GM13977 (cell line): ENCODE measurements at regions of chr17 and their contacts with region 1.

Region 1: DNA sequence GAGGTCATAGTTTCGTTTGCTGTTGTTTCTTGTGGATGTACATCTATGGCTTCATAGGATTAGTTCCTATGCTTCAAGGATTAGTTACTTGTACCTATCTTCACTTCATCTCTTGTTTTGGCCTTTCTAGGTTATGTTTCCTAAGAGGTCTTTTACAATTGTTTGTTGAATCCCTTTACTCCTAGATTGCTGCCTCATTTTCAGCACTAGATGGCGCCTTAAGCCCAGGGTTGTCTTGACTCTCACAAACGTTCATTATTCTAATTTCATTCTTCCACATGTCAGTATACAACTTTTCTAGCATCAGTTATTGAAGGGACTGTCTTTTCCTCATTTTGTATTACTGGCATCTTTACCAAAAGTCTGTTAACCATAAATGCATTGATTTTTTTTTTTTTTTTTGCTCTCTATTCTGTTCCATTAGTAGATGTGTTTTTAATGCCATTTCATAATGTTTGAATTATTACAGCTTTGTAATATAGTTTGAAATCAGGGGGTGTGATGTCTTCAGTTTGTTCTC is 45.0 kb upstream of the NACA2 start:
- DNase-seq: peak; percentile 12
- CTCF ChIP-seq: peak; percentile 79

Region 2: DNA sequence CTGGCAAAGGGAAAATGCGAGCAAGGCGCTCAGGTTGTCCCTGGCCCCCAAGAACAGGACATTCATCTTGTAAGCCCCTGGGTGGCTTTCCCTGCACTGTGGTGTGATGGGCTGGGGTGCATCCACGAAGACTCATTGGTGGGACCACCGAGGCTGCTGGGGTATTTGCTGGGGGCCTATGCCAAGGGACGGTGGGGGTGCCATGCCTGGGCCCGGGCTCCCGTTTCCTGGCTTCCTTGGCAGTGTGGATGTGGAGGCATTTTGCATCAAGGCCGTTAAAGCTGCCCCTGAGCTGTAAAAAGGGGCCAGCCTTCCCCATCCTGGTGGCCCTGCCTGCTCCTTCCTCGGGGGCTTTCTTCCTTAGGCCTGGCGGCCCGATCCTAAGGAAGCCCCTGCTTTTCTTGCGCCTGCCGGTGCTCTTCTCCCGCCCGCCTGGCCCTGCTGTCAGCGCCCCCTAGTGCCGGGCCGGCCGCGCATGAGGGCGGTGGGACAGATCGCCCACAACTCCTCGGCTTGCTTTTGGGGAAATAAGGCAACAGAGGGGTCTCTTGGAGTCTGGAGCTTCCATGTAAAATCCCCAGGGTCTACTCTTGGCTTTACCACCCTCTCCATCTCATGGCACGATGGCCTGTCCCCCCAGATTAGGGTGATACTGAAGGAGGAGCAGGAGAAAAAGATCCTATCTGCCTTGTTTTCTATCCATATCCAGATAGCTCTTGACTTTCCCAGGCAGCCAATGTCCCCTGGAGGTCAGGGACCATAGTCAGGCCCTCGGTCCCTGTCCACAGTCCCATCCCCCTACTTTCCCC is 246.1 kb before region 1 on chr17:
- in situ Hi-C with region 1: no loop called
- DNase-seq: peak; percentile 81
- CTCF ChIP-seq: peak; percentile 94

Region 3: DNA sequence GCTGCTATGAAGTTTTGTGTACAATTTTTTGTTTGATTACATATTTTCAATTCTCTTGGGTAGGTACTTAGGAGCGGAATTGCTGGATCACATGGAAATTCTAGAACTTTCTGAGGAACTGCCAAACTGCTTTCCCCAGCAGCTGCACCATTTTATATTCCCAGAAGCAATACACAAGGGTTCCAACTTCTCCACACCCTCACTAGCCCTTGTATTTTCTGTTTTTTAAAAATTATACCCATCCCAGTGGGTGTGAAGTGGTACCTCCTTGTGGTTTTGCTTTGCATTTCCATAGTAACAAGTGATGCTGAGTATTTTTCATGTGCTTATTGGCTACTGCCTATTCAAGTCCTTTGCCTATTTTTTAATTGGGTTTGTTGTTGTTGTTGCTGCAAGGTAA is 65.9 kb before region 1 on chr17:
- in situ Hi-C with region 1: no loop called
- DNase-seq: no peak
- CTCF ChIP-seq: no peak

Region 4: DNA sequence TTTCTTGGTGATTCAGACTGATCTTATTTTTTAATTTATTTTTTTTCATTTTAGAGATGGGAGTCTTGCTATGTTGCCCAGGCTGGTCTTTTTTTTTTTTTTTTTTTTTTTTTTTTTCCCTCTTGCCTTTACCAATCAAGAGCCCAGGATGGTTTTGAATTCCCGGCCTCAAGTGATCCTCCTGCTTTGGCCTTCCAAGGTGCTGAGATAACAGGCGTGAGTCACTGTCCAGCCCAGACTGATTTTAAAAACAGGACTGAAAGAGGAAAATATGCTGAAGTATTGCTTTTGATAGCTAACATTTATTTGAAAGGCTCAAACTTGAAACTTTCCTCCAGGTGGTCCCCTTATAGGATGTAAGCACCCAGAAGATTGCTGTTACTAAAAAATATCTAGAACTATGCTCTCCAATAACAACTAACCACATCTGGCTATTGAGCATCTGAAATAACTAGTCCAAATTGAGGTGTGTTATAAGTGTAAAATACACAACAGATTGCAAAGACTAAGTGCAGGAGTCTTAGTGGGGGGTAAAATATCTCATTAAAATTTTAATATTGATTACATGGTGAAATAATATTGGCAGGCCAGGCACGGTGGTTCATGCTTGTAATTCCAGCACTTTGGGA is 243.1 kb after region 1 on chr17:
- in situ Hi-C with region 1: no loop called
- DNase-seq: no peak
- CTCF ChIP-seq: no peak

Region 5: GRCh38 chr17:62109378-62109902 is 473.5 kb after region 1 on chr17:
- in situ Hi-C with region 1: loop called (anchors 10 kb)
- DNase-seq: peak; percentile 79
- CTCF ChIP-seq: peak; percentile 98